Activated T-helper 1 cell treated with anti-CD3 and anti-CD28 coated beads, Interleukin-12 subunit alpha, Interleukin-12 subunit beta, Interleukin-2, Interleukin-4 antibody, amounts not matched to agents 30 ng/mL and 10 ng/mL and 1 ng/mL, durations not matched to agents 14 hours and 24 hours and 36 hours (primary cell): ENCODE measurements at regions of chr6 and their contacts with region 1.

Region 1: GRCh38 chr6:55069132-55069781 is 105.1 kb upstream of the HCRTR2 start:
- DNase-seq: no peak
- H3K4me3 Mint-ChIP-seq: no peak overlapping the region
- H3K27ac Mint-ChIP-seq: no peak overlapping the region
- H3K4me1 Mint-ChIP-seq: no peaks in the 10 kb centered on the region
- H3K27me3 Mint-ChIP-seq: no peaks in the 10 kb centered on the region

Region 2: DNA sequence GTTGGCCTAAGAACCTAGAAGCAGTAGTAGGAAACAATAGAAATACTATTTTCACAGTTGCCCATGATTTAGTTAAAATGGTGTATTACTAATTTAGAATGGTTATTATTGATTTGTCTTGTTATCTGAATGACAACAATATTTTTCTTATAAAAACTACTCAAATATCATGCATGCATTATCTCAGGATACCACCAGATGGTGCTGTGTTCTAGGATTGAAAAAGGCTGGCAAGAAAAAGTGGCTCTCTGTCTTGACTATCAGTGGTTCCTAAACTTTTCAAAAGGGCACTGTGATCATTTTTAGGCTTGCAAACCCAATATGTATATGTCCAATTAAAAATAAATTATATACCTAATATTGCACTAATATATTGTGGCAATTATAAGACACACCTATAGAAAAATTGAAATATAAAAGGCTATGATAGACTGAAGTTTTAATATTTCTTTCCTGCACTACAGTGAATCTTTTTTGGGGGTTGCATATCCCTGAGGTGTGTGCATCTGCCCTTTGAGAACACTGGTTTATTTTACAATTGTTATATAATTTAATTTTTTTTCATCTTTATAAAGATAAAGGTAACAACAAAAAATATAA is 1089.7 kb before region 1 on chr6:
- intact Hi-C with region 1: loop called (anchors 5 kb)
- DNase-seq: no peak
- H3K4me3 Mint-ChIP-seq: no peak overlapping the region
- H3K27ac Mint-ChIP-seq: no peak overlapping the region
- H3K4me1 Mint-ChIP-seq: no peaks in the 10 kb centered on the region
- H3K27me3 Mint-ChIP-seq: no peaks in the 10 kb centered on the region

Region 3: DNA sequence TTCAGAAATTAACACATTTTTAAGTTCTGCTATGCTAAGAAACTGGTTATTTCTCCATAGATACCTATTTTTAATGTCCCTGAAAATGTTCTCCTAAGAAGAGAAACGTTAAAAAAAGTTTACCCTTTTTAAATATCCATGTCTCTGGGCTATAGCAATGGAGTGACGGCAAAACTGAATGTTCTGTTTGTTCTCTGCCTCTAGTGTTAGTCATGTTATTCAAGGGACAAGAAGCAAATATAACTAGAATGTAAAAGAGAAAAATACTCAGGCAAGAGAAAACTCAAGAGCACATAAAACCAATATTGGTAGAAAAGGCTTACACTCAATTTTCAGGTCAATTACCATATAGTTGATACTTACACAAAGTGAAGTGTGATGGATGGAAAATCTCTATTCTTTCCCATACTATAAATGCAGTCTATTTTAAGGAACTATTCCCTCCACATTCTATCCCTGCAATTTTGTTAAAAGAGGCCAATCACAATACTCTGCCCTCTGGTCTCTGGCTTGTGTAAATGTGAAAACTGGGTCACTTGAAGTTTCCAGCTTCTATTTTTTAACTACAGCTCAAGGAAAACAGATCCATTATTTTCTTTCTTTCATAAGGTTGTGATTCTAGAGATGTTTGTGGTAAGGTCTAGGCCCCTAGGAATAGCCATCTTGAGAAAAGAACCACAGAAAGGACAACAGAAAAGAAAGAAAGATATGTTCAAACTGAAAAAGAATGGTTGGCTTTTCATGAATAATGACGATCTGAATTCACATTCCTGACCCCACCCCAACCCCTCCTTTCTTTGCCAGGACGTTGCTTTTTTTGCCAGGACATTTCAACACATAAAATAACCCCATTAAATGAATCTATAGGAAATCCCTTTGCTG is 422.9 kb before region 1 on chr6:
- intact Hi-C with region 1: no loop called
- DNase-seq: no peak
- H3K4me3 Mint-ChIP-seq: no peak overlapping the region
- H3K27ac Mint-ChIP-seq: no peak overlapping the region
- H3K4me1 Mint-ChIP-seq: no peaks in the 10 kb centered on the region
- H3K27me3 Mint-ChIP-seq: no peaks in the 10 kb centered on the region